ENCODE measurements at regions of chr12 and their contacts with region 1.

Region 1: DNA sequence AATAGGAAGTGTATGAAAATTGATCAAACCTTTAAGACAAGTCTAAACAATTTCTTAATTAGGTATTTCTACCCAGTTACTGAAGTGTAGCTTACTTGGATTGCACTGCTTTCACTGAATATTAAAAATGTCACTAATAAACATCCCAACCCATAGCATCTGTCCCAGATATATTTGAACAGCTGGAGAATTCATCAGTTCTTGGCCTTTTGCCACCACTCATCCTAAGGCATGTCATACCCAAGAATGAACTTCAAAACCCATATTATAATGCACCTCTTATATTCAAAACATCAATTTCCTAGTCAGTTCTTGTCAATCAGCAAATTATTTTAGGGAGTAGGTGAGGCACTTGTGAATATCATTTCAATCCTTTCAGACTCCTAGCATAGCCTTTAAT is 392.3 kb downstream of the PAWR start:
- DNase-seq: no peak
- ATAC-seq: no peak
- H3K4me3 ChIP-seq: no peak overlapping the region
- H3K4me3 Mint-ChIP-seq: no peak overlapping the region
- H3K27ac ChIP-seq: no peak overlapping the region
- H3K27ac Mint-ChIP-seq: no peak overlapping the region
- H3K4me1 ChIP-seq: no peaks in the 10 kb centered on the region
- H3K4me1 Mint-ChIP-seq: no peaks in the 10 kb centered on the region
- H3K27me3 ChIP-seq: no peaks in the 10 kb centered on the region
- H3K27me3 Mint-ChIP-seq: no peaks in the 10 kb centered on the region
- CTCF ChIP-seq: no peak

Region 2: DNA sequence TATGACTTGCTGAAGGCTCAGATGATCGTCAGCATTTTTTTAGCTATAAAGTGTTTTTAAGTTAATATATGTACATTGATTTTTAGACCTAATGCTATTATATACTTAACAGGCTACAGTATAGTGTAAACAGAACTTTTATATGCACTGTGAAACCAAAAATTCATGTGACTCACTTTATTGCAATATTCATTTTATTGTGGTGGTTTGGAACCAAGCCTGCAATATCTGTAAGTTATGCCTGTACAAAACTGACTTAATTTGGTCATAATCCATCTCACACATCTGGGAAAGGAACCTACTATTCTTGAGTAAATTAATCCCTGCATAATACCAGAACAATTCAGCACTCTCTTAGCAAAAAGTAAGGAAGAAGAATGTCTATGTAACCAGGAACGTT is 43.2 kb before region 1 on chr12:
- CTCF ChIA-PET with region 1: no interaction called
- POLR2A ChIA-PET with region 1: no interaction called
- intact Hi-C with region 1: loop called in 1 of 2 experiments (anchors 5 kb)
- DNase-seq: no peak
- ATAC-seq: no peak
- H3K4me3 ChIP-seq: no peak overlapping the region
- H3K4me3 Mint-ChIP-seq: no peak overlapping the region
- H3K27ac ChIP-seq: no peak overlapping the region
- H3K27ac Mint-ChIP-seq: no peak overlapping the region
- H3K4me1 ChIP-seq: no peaks in the 10 kb centered on the region
- H3K4me1 Mint-ChIP-seq: no peaks in the 10 kb centered on the region
- H3K27me3 ChIP-seq: no peaks in the 10 kb centered on the region
- H3K27me3 Mint-ChIP-seq: no peaks in the 10 kb centered on the region
- CTCF ChIP-seq: no peak